A549 (cell line): ENCODE measurements at regions of chr5 and their contacts with region 1.

Region 1: DNA sequence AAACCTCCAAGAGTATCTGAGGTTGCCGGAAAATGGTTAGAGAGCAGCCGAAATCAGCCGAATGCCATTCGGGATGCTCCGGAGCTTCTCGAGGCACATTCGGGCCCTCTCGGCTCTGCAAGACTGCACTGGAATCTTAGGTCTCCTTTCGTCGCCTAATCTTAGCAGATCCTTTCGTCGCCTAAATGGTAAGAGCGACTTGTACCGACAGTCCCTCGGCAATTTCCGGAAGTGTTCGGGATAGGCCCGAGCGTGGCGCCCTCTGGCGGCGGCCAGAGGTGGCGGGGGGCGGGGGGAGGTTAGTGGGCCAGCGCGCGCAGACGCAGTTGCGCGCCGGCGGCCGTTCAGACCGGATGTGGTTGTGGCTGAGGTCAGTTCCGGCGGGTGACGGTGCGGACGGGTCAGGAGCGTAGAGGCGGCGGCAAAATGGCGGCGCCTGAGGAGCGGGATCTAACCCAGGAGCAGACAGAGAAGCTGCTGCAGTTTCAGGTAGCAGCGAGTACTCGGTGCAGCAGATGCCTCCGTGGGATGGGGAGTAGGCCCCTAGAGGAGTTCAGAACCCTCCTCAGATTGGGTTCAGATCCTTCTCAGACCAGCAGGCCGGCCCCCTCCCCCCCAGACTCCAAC is at the start of gene FAF2:
- DNase-seq: peak; percentile 99
- ATAC-seq: peak; percentile 95 to 97
- H3K4me3 ChIP-seq: peak within 1 kb of the TSS; percentile 83
- H3K27ac ChIP-seq: peak within 1 kb of the TSS; percentile 96
- H3K4me1 ChIP-seq: peaks cover 24% of the 10 kb centered on the region
- CTCF ChIP-seq: peak; percentile 96
- EP300 ChIP-seq: no peak
- POLR2A ChIP-seq: peak; percentile 83
- RAD21 ChIP-seq: peak in 1 of 2 experiments; percentile 28; a peak in 2 of 5 replicates
- polyA plus RNA-seq, gene FAF2: 90.3 and 90.6 TPM in 2 replicates

Region 2: GRCh38 chr5:176429972-176430371 is 18.1 kb before region 1 on chr5:
- CTCF ChIA-PET with region 1: interaction called, 16 read pairs
- POLR2A ChIA-PET with region 1: interaction called, 3 read pairs
- DNase-seq: peak in 1 of 2 experiments; percentile 49
- ATAC-seq: peak; percentile 66 to 86; a peak in 4 of 6 replicates
- H3K4me3 ChIP-seq: no peak overlapping the region
- H3K27ac ChIP-seq: no peak overlapping the region
- H3K4me1 ChIP-seq: peaks cover 12% of the 10 kb centered on the region; the same call in 2 of the 3 replicates
- CTCF ChIP-seq: no peak
- EP300 ChIP-seq: no peak
- POLR2A ChIP-seq: no peak
- RAD21 ChIP-seq: no peak

Region 3: GRCh38 chr5:176458904-176459561 is 10.9 kb after region 1 on chr5:
- CTCF ChIA-PET with region 1: interaction called, 14 read pairs
- POLR2A ChIA-PET with region 1: interaction called, 4 read pairs
- DNase-seq: no peak
- ATAC-seq: no peak
- H3K4me3 ChIP-seq: no peak overlapping the region
- H3K27ac ChIP-seq: no peak overlapping the region
- H3K4me1 ChIP-seq: peaks cover 10% of the 10 kb centered on the region
- CTCF ChIP-seq: no peak
- EP300 ChIP-seq: no peak
- POLR2A ChIP-seq: no peak
- RAD21 ChIP-seq: no peak

Region 4: GRCh38 chr5:176474510-176474909 is 26.4 kb after region 1 on chr5:
- CTCF ChIA-PET with region 1: interaction called, 13 read pairs
- POLR2A ChIA-PET with region 1: no interaction called
- DNase-seq: no peak
- ATAC-seq: no peak
- H3K4me3 ChIP-seq: no peak overlapping the region
- H3K27ac ChIP-seq: no peak overlapping the region
- H3K4me1 ChIP-seq: no peaks in the 10 kb centered on the region; the same call in 2 of the 3 replicates
- CTCF ChIP-seq: no peak
- EP300 ChIP-seq: no peak
- POLR2A ChIP-seq: no peak
- RAD21 ChIP-seq: no peak

Region 5: GRCh38 chr5:176543428-176544173 is 95.5 kb after region 1 on chr5:
- CTCF ChIA-PET with region 1: interaction called, 18 read pairs
- POLR2A ChIA-PET with region 1: interaction called, 10 read pairs
- DNase-seq: peak; percentile 53 to 73
- ATAC-seq: peak; percentile 77 to 86
- H3K4me3 ChIP-seq: peak overlapping the region; percentile 66
- H3K27ac ChIP-seq: peak overlapping the region; percentile 89 to 95
- H3K4me1 ChIP-seq: peaks cover 51% of the 10 kb centered on the region
- CTCF ChIP-seq: no peak
- EP300 ChIP-seq: no peak
- POLR2A ChIP-seq: peak; percentile 78
- RAD21 ChIP-seq: no peak